ENCODE measurements at regions of chr15 and their contacts with region 1.

Region 1: DNA sequence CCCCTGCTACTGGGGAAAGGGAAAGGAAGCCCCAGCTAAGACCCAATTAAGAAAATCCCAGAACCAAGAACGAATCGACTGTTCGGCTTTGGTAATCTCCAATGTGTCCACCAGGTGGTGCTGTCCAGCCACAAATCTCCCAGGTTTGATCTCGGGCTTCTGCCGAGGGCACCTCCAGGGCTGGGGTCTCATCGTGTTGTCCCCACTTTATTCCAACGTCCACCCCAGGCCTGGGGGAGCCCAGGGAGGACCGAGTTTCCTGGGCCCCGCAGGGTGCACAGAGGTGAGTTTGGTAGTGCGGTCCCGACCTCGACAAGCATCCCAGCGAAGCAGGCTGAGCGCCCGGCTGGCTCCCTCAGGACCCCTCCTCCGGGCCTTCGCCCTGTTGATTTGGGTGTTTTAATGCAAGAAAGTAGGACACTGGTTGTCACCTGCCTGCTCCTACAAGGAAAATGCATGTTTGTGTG is 185.1 kb downstream of the GOLGA6L6 start:
- DNase-seq: peak; percentile 72 to 91 (median 84)
- ATAC-seq: peak; percentile 83
- H3K4me3 ChIP-seq: no peak overlapping the region
- H3K4me3 Mint-ChIP-seq: no peak overlapping the region
- H3K27ac ChIP-seq: no peak overlapping the region
- H3K27ac Mint-ChIP-seq: peak overlapping the region; percentile 37
- H3K4me1 ChIP-seq: peaks cover 36% of the 10 kb centered on the region
- H3K4me1 Mint-ChIP-seq: peaks cover 7% of the 10 kb centered on the region
- H3K27me3 ChIP-seq: no peaks in the 10 kb centered on the region
- H3K27me3 Mint-ChIP-seq: peaks cover 5% of the 10 kb centered on the region
- CTCF ChIP-seq: peak; percentile 100

Region 2: GRCh38 chr15:20272422-20273184 is 83.9 kb before region 1 on chr15:
- CTCF ChIA-PET with region 1: no interaction called
- POLR2A ChIA-PET with region 1: no interaction called
- intact Hi-C with region 1: no loop called
- DNase-seq: no peak
- ATAC-seq: no peak
- H3K4me3 ChIP-seq: no peak overlapping the region
- H3K4me3 Mint-ChIP-seq: no peak overlapping the region
- H3K27ac ChIP-seq: no peak overlapping the region
- H3K27ac Mint-ChIP-seq: no peak overlapping the region
- H3K4me1 ChIP-seq: no peaks in the 10 kb centered on the region
- H3K4me1 Mint-ChIP-seq: no peaks in the 10 kb centered on the region
- H3K27me3 ChIP-seq: peaks cover 0 to 9% of the 10 kb centered on the region in 2 experiments
- H3K27me3 Mint-ChIP-seq: no peaks in the 10 kb centered on the region
- CTCF ChIP-seq: no peak

Region 3: GRCh38 chr15:20310603-20311002 is 45.9 kb before region 1 on chr15:
- CTCF ChIA-PET with region 1: no interaction called
- POLR2A ChIA-PET with region 1: no interaction called
- intact Hi-C with region 1: loop called in 1 of 2 experiments (anchors 10 kb)
- DNase-seq: no peak
- ATAC-seq: no peak
- H3K4me3 ChIP-seq: no peak overlapping the region
- H3K4me3 Mint-ChIP-seq: no peak overlapping the region
- H3K27ac ChIP-seq: no peak overlapping the region
- H3K27ac Mint-ChIP-seq: no peak overlapping the region
- H3K4me1 ChIP-seq: no peaks in the 10 kb centered on the region
- H3K4me1 Mint-ChIP-seq: no peaks in the 10 kb centered on the region
- H3K27me3 ChIP-seq: no peaks in the 10 kb centered on the region
- H3K27me3 Mint-ChIP-seq: no peaks in the 10 kb centered on the region
- CTCF ChIP-seq: no peak

Region 4: DNA sequence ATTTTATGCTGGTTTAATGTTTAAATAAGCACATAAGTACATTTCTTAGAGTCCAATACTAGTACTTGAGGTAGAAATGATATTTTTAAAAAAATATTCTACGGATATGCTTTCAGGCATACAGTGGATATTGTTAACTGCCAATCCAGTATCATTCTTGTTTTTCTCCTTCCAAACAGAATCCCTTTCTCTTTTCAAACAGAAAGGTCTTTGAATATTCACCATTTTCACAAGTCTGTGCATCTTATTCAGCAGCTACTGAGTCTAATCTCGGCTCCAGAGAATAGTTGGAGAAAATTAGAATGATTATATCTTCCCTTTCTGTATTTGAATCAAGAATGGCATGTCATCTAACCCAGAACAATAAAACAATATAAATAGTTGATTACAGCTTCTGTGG is 10.6 kb after region 1 on chr15:
- CTCF ChIA-PET with region 1: no interaction called
- POLR2A ChIA-PET with region 1: no interaction called
- intact Hi-C with region 1: loop called in 1 of 2 experiments (anchors 1 kb)
- DNase-seq: no peak
- ATAC-seq: no peak
- H3K4me3 ChIP-seq: no peak overlapping the region
- H3K4me3 Mint-ChIP-seq: no peak overlapping the region
- H3K27ac ChIP-seq: no peak overlapping the region
- H3K27ac Mint-ChIP-seq: no peak overlapping the region
- H3K4me1 ChIP-seq: no peaks in the 10 kb centered on the region
- H3K4me1 Mint-ChIP-seq: no peaks in the 10 kb centered on the region
- H3K27me3 ChIP-seq: no peaks in the 10 kb centered on the region
- H3K27me3 Mint-ChIP-seq: no peaks in the 10 kb centered on the region
- CTCF ChIP-seq: no peak

Region 5: DNA sequence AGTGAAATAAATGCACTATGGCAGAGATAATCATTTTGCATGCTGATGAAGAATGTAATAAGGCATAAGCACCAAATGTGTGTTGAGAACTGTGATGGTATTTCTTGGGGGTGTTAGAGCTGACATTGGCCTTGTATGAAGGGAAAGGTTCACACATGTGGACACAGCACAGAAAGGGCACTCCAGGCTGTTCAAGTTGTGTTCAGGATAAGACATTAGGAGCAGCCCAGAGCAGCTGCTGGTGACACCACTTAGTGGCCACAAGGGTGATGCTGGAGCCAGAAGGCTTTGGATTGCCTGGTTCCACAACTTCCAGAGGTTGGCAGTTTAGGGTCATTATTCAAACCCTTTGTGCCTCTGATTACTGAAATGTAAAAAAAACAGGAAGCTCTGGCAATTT is 29.7 kb after region 1 on chr15:
- CTCF ChIA-PET with region 1: no interaction called
- POLR2A ChIA-PET with region 1: no interaction called
- intact Hi-C with region 1: loop called in 1 of 2 experiments (anchors 5 kb)
- DNase-seq: no peak
- ATAC-seq: no peak
- H3K4me3 ChIP-seq: no peak overlapping the region
- H3K4me3 Mint-ChIP-seq: no peak overlapping the region
- H3K27ac ChIP-seq: no peak overlapping the region
- H3K27ac Mint-ChIP-seq: no peak overlapping the region
- H3K4me1 ChIP-seq: no peaks in the 10 kb centered on the region
- H3K4me1 Mint-ChIP-seq: no peaks in the 10 kb centered on the region
- H3K27me3 ChIP-seq: no peaks in the 10 kb centered on the region
- H3K27me3 Mint-ChIP-seq: no peaks in the 10 kb centered on the region
- CTCF ChIP-seq: no peak

Region 6: DNA sequence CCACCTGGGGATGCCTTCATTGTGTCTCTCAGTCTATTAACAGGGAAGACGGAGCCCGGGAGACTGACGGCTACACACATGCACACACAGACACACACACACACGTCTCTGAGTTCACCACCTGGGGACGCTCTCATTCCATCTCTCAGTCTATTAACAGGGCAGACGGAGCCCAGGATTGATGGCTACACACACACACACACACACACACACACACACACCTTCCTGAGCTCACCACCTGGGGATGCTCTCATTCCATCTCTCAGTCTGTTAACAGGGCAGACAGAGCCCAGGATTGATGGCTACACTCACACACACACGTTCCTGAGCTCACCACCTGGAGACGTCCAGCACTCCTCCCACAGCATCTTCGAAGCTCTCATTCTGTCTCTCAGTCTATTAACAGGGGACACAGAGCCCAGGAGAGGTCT is 1867.8 kb after region 1 on chr15:
- CTCF ChIA-PET with region 1: interaction called, 9 read pairs
- POLR2A ChIA-PET with region 1: interaction called, 59 read pairs
- intact Hi-C with region 1: loop called in 1 of 2 experiments (anchors 10 kb)
- DNase-seq: peak in 3 of 14 experiments; percentile 26 to 37 (median 33)
- ATAC-seq: no peak
- H3K4me3 ChIP-seq: no peak overlapping the region
- H3K4me3 Mint-ChIP-seq: no peak overlapping the region
- H3K27ac ChIP-seq: no peak overlapping the region
- H3K27ac Mint-ChIP-seq: peak overlapping the region; percentile 94
- H3K4me1 ChIP-seq: peaks cover 22% of the 10 kb centered on the region
- H3K4me1 Mint-ChIP-seq: peaks cover 36% of the 10 kb centered on the region
- H3K27me3 ChIP-seq: no peaks in the 10 kb centered on the region
- H3K27me3 Mint-ChIP-seq: no peaks in the 10 kb centered on the region
- CTCF ChIP-seq: no peak

Region 7: GRCh38 chr15:22229971-22230815 is 1873.7 kb after region 1 on chr15:
- CTCF ChIA-PET with region 1: no interaction called
- POLR2A ChIA-PET with region 1: no interaction called
- intact Hi-C with region 1: loop called (anchors 2 to 10 kb)
- DNase-seq: peak in 2 of 14 experiments; percentile 4 to 31
- ATAC-seq: no peak
- H3K4me3 ChIP-seq: no peak overlapping the region
- H3K4me3 Mint-ChIP-seq: no peak overlapping the region
- H3K27ac ChIP-seq: no peak overlapping the region
- H3K27ac Mint-ChIP-seq: no peak overlapping the region
- H3K4me1 ChIP-seq: no peaks in the 10 kb centered on the region
- H3K4me1 Mint-ChIP-seq: no peaks in the 10 kb centered on the region
- H3K27me3 ChIP-seq: no peaks in the 10 kb centered on the region
- H3K27me3 Mint-ChIP-seq: no peaks in the 10 kb centered on the region
- CTCF ChIP-seq: no peak

Measured in CD4-positive, alpha-beta T cell (primary cell).